Activated CD4-positive, alpha-beta T cell treated with anti-CD3 and anti-CD28 coated beads, Interleukin-2, amount 10 ng/mL, durations not matched to agents 24 days and 14 days (primary cell): ENCODE measurements at regions of chr9 and their contacts with region 1.

Region 1: DNA sequence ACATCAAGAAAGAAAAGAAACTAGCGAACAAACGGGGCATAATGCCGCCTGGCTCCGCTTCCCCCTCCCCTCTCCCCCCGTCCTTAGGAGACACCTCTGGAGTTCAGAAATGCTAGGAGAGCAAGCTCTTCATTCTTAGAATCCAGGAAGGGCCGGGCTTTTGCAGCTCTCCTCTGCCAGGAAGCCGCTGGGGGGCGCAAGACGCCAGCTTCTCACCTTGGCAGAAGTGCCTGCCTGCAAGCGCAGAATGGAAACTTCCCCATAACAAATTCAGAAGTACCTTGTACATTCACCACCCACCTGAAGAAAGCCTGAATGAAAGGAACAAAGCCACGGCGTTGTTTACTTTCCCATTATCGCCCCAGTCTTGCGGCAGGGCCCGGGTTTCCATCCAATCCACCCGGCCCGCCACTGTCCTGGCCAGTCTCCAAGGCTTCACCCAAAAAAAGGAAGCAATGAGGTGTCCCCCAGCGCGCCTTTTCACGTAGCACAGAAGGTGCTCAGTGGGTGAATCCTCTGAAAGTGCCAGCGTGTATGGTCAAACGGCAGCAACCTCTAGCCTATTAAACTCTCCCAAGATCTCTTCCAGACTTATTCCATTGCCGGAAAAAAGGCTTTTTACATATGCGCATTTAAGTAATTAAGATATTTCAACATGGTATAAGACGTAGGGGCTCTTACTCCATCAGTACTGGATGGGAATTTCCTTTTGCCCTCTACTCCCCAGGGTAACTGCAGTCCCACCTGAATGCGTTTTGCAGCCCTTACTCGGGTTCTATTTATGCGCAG is 1.6 kb upstream of the GADD45G start:
- DNase-seq: peak; percentile 97
- H3K4me3 Mint-ChIP-seq: peak overlapping the region; percentile 92
- H3K27ac Mint-ChIP-seq: peak overlapping the region; percentile 89
- H3K4me1 Mint-ChIP-seq: peaks cover 32% of the 10 kb centered on the region
- H3K27me3 Mint-ChIP-seq: peaks cover 17% of the 10 kb centered on the region

Region 2: DNA sequence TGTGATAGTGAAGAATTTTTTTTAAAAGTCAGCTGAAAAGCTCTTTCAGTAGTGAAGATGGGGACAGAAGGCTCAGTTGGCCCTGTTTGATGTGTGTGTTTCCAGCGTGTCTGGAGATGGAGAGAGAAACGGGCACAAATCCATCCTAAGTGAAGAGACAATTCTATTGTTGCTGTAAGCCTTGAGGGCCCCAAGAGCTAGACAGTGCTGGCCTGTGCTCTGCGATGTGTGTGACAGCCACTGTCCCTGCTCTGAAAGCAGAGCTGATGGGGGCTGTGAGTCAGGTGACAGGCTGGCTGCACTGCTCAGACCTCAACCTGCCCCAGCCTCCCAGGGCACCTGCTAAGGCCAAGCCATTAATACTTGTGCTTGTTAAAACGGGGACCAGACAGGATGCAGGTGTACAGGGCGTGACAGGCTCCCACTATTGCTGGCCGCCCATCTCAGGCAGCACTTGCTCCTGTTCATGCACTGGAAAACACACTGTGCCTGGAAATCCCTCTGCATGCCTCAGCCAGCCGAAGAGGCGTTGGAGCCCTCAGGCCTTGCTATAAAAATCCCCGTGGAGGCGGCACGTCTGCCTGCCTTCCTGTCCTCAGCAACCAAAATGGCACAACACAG is 60.7 kb before region 1 on chr9:
- intact Hi-C with region 1: no loop called
- DNase-seq: no peak
- H3K4me3 Mint-ChIP-seq: no peak overlapping the region
- H3K27ac Mint-ChIP-seq: peak overlapping the region; percentile 20
- H3K4me1 Mint-ChIP-seq: peaks cover 40% of the 10 kb centered on the region
- H3K27me3 Mint-ChIP-seq: no peaks in the 10 kb centered on the region

Region 3: DNA sequence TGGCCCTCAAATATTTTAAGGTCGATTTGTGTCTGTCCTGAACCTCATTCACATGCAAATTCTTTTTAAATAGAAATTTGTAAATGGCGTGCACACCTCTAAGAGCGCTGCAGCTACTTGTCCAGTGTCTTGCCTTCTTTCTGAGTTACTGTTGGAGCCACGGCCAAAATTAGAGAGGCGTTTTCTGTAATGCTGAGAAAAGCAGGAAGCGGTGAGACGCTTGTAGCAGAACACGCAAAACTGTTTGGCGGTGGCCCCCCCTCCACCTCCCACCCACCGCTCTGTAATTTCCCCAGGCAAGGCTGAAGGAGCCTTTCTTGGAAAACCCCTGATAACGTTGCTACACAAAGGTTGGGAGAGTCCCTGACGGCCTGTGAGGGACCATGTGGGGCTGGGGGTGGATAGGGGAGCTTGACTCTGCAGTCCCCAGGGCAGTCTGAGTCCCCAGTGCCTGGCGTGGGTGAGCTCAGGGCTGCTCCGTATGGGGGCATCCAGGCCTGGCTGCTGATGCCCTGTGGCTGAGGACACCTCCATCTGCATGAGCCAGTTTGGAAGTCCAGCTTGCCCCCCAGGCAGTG is 98.1 kb after region 1 on chr9:
- intact Hi-C with region 1: loop called (anchors 1 kb)
- DNase-seq: peak; percentile 93
- H3K4me3 Mint-ChIP-seq: peak overlapping the region; percentile 99
- H3K27ac Mint-ChIP-seq: peak overlapping the region; percentile 98
- H3K4me1 Mint-ChIP-seq: peaks cover 73% of the 10 kb centered on the region
- H3K27me3 Mint-ChIP-seq: no peaks in the 10 kb centered on the region

Region 4: GRCh38 chr9:89825669-89826068 is 222.5 kb after region 1 on chr9:
- intact Hi-C with region 1: loop called (anchors 2 kb)
- DNase-seq: no peak
- H3K4me3 Mint-ChIP-seq: no peak overlapping the region
- H3K27ac Mint-ChIP-seq: no peak overlapping the region
- H3K4me1 Mint-ChIP-seq: peaks cover 21% of the 10 kb centered on the region
- H3K27me3 Mint-ChIP-seq: peaks cover 5% of the 10 kb centered on the region

Region 5: GRCh38 chr9:89999534-90000370 is 396.6 kb after region 1 on chr9:
- intact Hi-C with region 1: loop called (anchors 1 kb)
- DNase-seq: peak; percentile 92
- H3K4me3 Mint-ChIP-seq: peak overlapping the region; percentile 76
- H3K27ac Mint-ChIP-seq: peak overlapping the region; percentile 86
- H3K4me1 Mint-ChIP-seq: peaks cover 32% of the 10 kb centered on the region
- H3K27me3 Mint-ChIP-seq: no peaks in the 10 kb centered on the region